CD4-positive, alpha-beta T cell (primary cell): ENCODE measurements at regions of chr7 and their contacts with region 1.

Region 1: GRCh38 chr7:141533149-141533949 is 17.9 kb upstream of the AGK start:
- DNase-seq: peak; percentile 31 to 83 (median 52)
- ATAC-seq: peak; percentile 48
- H3K4me3 ChIP-seq: no peak overlapping the region
- H3K4me3 Mint-ChIP-seq: no peak overlapping the region
- H3K27ac ChIP-seq: no peak overlapping the region
- H3K27ac Mint-ChIP-seq: no peak overlapping the region
- H3K4me1 ChIP-seq: peaks cover 3% of the 10 kb centered on the region
- H3K4me1 Mint-ChIP-seq: no peaks in the 10 kb centered on the region
- H3K27me3 ChIP-seq: peaks cover 0 to 7% of the 10 kb centered on the region in 2 experiments
- H3K27me3 Mint-ChIP-seq: peaks cover 42% of the 10 kb centered on the region
- CTCF ChIP-seq: peak; percentile 96

Region 2: GRCh38 chr7:140517546-140518369 is 1015.6 kb before region 1 on chr7:
- CTCF ChIA-PET with region 1: interaction called, 3 read pairs
- POLR2A ChIA-PET with region 1: no interaction called
- intact Hi-C with region 1: loop called in 1 of 2 experiments (anchors 5 kb)
- DNase-seq: peak; percentile 31 to 79 (median 56)
- ATAC-seq: peak; percentile 81
- H3K4me3 ChIP-seq: no peak overlapping the region
- H3K4me3 Mint-ChIP-seq: no peak overlapping the region
- H3K27ac ChIP-seq: no peak overlapping the region
- H3K27ac Mint-ChIP-seq: no peak overlapping the region
- H3K4me1 ChIP-seq: peaks cover 5% of the 10 kb centered on the region
- H3K4me1 Mint-ChIP-seq: peaks cover 4% of the 10 kb centered on the region
- H3K27me3 ChIP-seq: no peaks in the 10 kb centered on the region
- H3K27me3 Mint-ChIP-seq: peaks cover 10% of the 10 kb centered on the region
- CTCF ChIP-seq: peak; percentile 72

Region 3: GRCh38 chr7:140726281-140726680 is 807.1 kb before region 1 on chr7:
- CTCF ChIA-PET with region 1: no interaction called
- POLR2A ChIA-PET with region 1: no interaction called
- intact Hi-C with region 1: loop called in 1 of 2 experiments (anchors 10 kb)
- DNase-seq: peak in 3 of 14 experiments; percentile 16 to 20 (median 16)
- ATAC-seq: no peak
- H3K4me3 ChIP-seq: no peak overlapping the region
- H3K4me3 Mint-ChIP-seq: no peak overlapping the region
- H3K27ac ChIP-seq: no peak overlapping the region
- H3K27ac Mint-ChIP-seq: peak overlapping the region; percentile 48
- H3K4me1 ChIP-seq: peaks cover 3% of the 10 kb centered on the region
- H3K4me1 Mint-ChIP-seq: peaks cover 19% of the 10 kb centered on the region
- H3K27me3 ChIP-seq: no peaks in the 10 kb centered on the region
- H3K27me3 Mint-ChIP-seq: no peaks in the 10 kb centered on the region
- CTCF ChIP-seq: no peak

Region 4: DNA sequence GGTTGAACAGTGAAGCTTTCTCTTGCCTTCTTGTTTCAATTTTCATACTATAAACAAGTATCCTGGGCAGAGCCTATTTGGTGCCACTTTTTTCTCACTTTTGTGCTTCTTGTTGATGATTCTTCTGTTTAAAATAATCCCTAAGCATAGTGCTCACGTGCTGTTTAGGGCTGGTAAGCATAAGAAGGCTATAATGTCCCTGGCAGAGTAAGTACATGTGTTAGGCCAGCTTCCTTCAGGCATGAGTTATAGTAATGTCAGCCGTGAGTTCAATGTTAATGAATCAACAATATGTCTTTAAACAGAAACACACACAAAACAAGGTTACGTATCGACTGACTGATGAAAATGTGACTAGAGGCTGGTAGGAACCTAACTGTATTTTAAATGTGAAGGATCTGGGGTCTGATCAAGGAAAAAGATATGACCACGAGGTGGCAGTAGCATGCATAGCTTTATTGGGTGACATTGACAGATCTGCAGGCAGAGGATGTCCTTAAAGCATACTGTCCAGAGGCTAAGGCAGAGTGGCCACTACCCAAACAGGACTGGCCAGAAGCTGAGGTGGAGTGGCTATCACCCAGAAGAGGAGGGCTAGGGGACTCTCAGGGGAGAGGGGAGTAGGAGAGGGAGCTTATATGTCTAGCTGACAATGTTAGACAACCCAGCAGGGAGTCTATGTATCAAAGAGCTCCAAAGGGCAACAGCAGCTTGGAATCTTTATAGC is 722.4 kb before region 1 on chr7:
- CTCF ChIA-PET with region 1: no interaction called
- POLR2A ChIA-PET with region 1: no interaction called
- intact Hi-C with region 1: loop called in 1 of 2 experiments (anchors 5 kb)
- DNase-seq: peak; percentile 6 to 84 (median 44)
- ATAC-seq: peak; percentile 84
- H3K4me3 ChIP-seq: no peak overlapping the region
- H3K4me3 Mint-ChIP-seq: no peak overlapping the region
- H3K27ac ChIP-seq: no peak overlapping the region
- H3K27ac Mint-ChIP-seq: no peak overlapping the region
- H3K4me1 ChIP-seq: no peaks in the 10 kb centered on the region
- H3K4me1 Mint-ChIP-seq: peaks cover 13% of the 10 kb centered on the region
- H3K27me3 ChIP-seq: no peaks in the 10 kb centered on the region
- H3K27me3 Mint-ChIP-seq: no peaks in the 10 kb centered on the region
- CTCF ChIP-seq: peak; percentile 81

Region 5: GRCh38 chr7:141072548-141073172 is 460.7 kb before region 1 on chr7:
- CTCF ChIA-PET with region 1: no interaction called
- POLR2A ChIA-PET with region 1: no interaction called
- intact Hi-C with region 1: loop called in 1 of 2 experiments (anchors 5 kb)
- DNase-seq: peak in 5 of 14 experiments; percentile 3 to 45 (median 34)
- ATAC-seq: peak; percentile 34
- H3K4me3 ChIP-seq: peak overlapping the region; percentile 56
- H3K4me3 Mint-ChIP-seq: peak overlapping the region; percentile 81
- H3K27ac ChIP-seq: no peak overlapping the region
- H3K27ac Mint-ChIP-seq: no peak overlapping the region
- H3K4me1 ChIP-seq: peaks cover 35% of the 10 kb centered on the region
- H3K4me1 Mint-ChIP-seq: peaks cover 20% of the 10 kb centered on the region
- H3K27me3 ChIP-seq: peaks cover 43 to 58% of the 10 kb centered on the region in 2 experiments
- H3K27me3 Mint-ChIP-seq: peaks cover 48% of the 10 kb centered on the region
- CTCF ChIP-seq: no peak